Heart left ventricle (tissue), 16 donors: ENCODE measurements at regions of chr12 and their contacts with region 1.

Region 1: GRCh38 chr12:56117778-56118687 is at the start of gene ZC3H10:
- DNase-seq: peak; percentile 96 to 99 (median 97)
- ATAC-seq: peak; percentile 86 to 92 (median 87)
- H3K4me3 ChIP-seq: peak within 1 kb of the TSS; percentile 65 to 95 (median 78)
- H3K27ac ChIP-seq: peak within 1 kb of the TSS; percentile 72 to 98 (median 94)
- H3K4me1 ChIP-seq: peaks cover 0 to 53% (median 25%) of the 10 kb centered on the region in 12 donors
- H3K27me3 ChIP-seq: no peaks in the 10 kb centered on the region
- CTCF ChIP-seq: peak in 11 of 12 donors; percentile 24 to 80 (median 57)
- POLR2A ChIP-seq: peak in 1 of 2 donors; percentile 89
- total RNA-seq, gene ZC3H10: 2.7 to 6.4 (median 4.9) TPM

Region 2: DNA sequence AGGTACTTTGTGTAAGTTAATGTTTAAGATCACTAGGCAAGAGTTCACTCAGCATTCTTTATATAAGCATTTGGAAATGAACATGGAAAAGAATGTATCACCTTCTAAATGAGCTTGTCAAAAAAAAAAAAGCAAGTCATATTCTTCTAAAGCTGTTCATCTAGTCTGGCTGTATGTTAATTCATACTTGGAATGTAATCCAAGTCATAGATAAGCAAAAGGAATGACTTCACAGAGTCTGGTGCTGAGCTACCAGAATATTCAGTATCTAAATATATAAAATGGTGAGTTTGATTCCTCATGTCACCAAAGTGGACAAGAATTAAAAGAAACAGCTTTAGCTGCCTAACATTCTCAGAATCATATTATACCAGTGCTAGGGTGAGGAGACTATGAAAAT is 563.7 kb before region 1 on chr12:
- intact Hi-C with region 1: no loop called
- DNase-seq: no peak
- ATAC-seq: no peak
- H3K4me3 ChIP-seq: no peak overlapping the region
- H3K27ac ChIP-seq: no peak overlapping the region
- H3K4me1 ChIP-seq: no peaks in the 10 kb centered on the region
- H3K27me3 ChIP-seq: no peaks in the 10 kb centered on the region
- CTCF ChIP-seq: no peak
- POLR2A ChIP-seq: no peak

Region 3: GRCh38 chr12:56041552-56042429 is 76.2 kb before region 1 on chr12 and contains the start of gene RPS26:
- intact Hi-C with region 1: loop called in 2 of 10 experiments (anchors 5 to 10 kb)
- DNase-seq: peak; percentile 95 to 99 (median 97)
- ATAC-seq: peak; percentile 96 to 98 (median 97)
- H3K4me3 ChIP-seq: peak within 1 kb of the TSS; percentile 66 to 97 (median 83)
- H3K27ac ChIP-seq: peak within 1 kb of the TSS; percentile 89 to 99 (median 96)
- H3K4me1 ChIP-seq: peaks cover 3 to 23% (median 17%) of the 10 kb centered on the region in 12 donors
- H3K27me3 ChIP-seq: no peaks in the 10 kb centered on the region
- CTCF ChIP-seq: peak; percentile 22 to 65 (median 50)
- POLR2A ChIP-seq: peak in 1 of 2 donors; percentile 52
- total RNA-seq, gene RPS26: 11.7 to 616 (median 23.2) TPM

Region 4: GRCh38 chr12:56158029-56158925 is 40.2 kb after region 1 on chr12 and contains the start of gene MYL6:
- intact Hi-C with region 1: loop called in 7 of 10 experiments (anchors 2 to 5 kb)
- DNase-seq: peak; percentile 92 to 98 (median 98)
- ATAC-seq: peak; percentile 88 to 92 (median 90)
- H3K4me3 ChIP-seq: peak within 1 kb of the TSS; percentile 62 to 98 (median 90)
- H3K27ac ChIP-seq: peak within 1 kb of the TSS; percentile 92 to 99 (median 98)
- H3K4me1 ChIP-seq: peaks cover 4 to 48% (median 37%) of the 10 kb centered on the region in 12 donors
- H3K27me3 ChIP-seq: no peaks in the 10 kb centered on the region
- CTCF ChIP-seq: no peak
- POLR2A ChIP-seq: peak; percentile 99
- total RNA-seq, gene MYL6: 355 to 949 (median 613) TPM

Region 5: DNA sequence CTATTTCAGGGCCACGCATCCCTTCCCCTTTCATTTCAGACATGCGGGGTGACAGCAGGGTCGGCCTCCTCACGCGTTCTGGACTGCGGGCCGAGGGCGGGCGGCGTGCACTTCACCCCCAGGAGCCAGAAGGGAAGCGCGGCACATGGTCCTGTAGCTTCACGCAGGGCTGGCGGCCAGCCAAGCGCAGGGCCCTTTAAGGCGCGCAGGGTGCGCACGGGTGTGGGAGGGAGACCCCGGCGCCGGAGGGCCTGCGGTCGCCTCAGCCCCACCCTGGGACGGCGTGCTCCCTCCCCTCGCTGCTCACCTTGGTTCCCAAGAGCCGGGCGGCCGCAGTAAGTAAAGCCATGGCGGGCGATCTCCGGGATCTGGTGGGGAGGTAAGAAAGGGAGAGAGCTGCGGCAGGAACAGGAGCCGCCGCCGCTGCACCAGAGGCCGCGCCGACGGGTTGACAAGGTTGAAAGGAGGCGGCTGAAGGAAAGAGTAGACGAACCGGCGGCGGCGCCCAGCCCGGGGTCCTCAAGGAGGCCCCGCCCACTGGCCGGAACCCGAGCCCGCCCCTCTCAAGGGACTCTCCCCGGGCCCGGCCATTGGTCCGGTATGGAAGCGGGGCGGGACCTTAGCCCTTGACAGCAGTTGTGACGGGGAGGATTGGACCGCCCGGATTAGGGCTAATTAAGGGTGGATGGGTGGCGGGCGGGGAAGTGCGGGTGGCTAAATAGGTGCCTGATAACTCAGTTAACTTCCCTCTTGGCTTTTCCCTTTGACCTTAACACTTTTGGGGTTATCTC is 182.0 kb after region 1 on chr12 and contains the start of gene CS:
- intact Hi-C with region 1: loop called in 2 of 10 experiments (anchors 2 to 5 kb)
- DNase-seq: peak; percentile 99 to 100 (median 99)
- ATAC-seq: peak; percentile 97 to 99 (median 98)
- H3K4me3 ChIP-seq: peak within 1 kb of the TSS; percentile 62 to 98 (median 84)
- H3K27ac ChIP-seq: peak within 1 kb of the TSS; percentile 89 to 100 (median 96)
- H3K4me1 ChIP-seq: peaks cover 24 to 63% (median 53%) of the 10 kb centered on the region in 12 donors
- H3K27me3 ChIP-seq: no peaks in the 10 kb centered on the region
- CTCF ChIP-seq: no peak
- POLR2A ChIP-seq: peak; percentile 21 to 90
- total RNA-seq, gene CS: 489 to 866 (median 662) TPM